Activated naive CD4-positive, alpha-beta T cell treated with anti-CD3 and anti-CD28 coated beads for 36 hours (primary cell): ENCODE measurements at regions of chr10 and their contacts with region 1.

Region 1: GRCh38 chr10:12068449-12069269 is at the start of gene DHTKD1:
- DNase-seq: peak; percentile 99
- H3K4me3 Mint-ChIP-seq: peak within 1 kb of the TSS; percentile 83
- H3K27ac Mint-ChIP-seq: peak within 1 kb of the TSS; percentile 88
- H3K4me1 Mint-ChIP-seq: peaks cover 21% of the 10 kb centered on the region
- H3K27me3 Mint-ChIP-seq: no peaks in the 10 kb centered on the region
- total RNA-seq, gene DHTKD1: 17.0 to 20.1 TPM

Region 2: GRCh38 chr10:12042797-12043651 is 25.6 kb before region 1 on chr10 and contains the start of gene UPF2:
- CTCF ChIA-PET with region 1: no interaction called
- intact Hi-C with region 1: loop called (anchors 1 kb)
- DNase-seq: peak; percentile 98
- H3K4me3 Mint-ChIP-seq: peak within 1 kb of the TSS; percentile 98
- H3K27ac Mint-ChIP-seq: peak within 1 kb of the TSS; percentile 99
- H3K4me1 Mint-ChIP-seq: peaks cover 33% of the 10 kb centered on the region
- H3K27me3 Mint-ChIP-seq: no peaks in the 10 kb centered on the region
- total RNA-seq, gene UPF2: 27.5 to 29.5 TPM

Region 3: DNA sequence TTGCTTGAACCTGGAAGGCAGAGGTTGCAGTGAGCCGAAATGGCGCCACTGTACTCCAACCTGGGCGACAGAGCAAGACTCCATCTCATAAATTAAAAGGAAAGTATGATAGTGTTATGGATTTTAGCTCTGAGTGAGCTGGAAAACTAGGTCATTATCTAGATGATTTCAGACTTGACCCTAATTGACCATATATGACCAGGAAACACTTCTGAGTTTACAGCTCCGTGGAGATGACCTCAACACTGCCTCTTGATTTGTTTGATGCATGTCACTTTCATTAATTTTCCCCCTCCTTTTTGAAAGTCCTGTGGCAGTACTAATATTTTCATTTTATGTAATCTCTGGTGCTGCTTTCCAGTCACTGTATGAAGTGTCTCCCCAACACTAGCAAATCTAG is 53.0 kb after region 1 on chr10:
- CTCF ChIA-PET with region 1: no interaction called
- intact Hi-C with region 1: loop called (anchors 1 kb)
- DNase-seq: no peak
- H3K4me3 Mint-ChIP-seq: no peak overlapping the region
- H3K27ac Mint-ChIP-seq: peak overlapping the region; percentile 98
- H3K4me1 Mint-ChIP-seq: peaks cover 30% of the 10 kb centered on the region
- H3K27me3 Mint-ChIP-seq: no peaks in the 10 kb centered on the region

Region 4: GRCh38 chr10:12140038-12140437 is 71.4 kb after region 1 on chr10:
- CTCF ChIA-PET with region 1: no interaction called
- intact Hi-C with region 1: no loop called
- DNase-seq: no peak
- H3K4me3 Mint-ChIP-seq: no peak overlapping the region
- H3K27ac Mint-ChIP-seq: no peak overlapping the region
- H3K4me1 Mint-ChIP-seq: no peaks in the 10 kb centered on the region
- H3K27me3 Mint-ChIP-seq: no peaks in the 10 kb centered on the region

Region 5: GRCh38 chr10:12195603-12196506 is 127.2 kb after region 1 on chr10 and contains the starts of genes CDC123 and NUDT5:
- CTCF ChIA-PET with region 1: no interaction called
- intact Hi-C with region 1: loop called (anchors 1 kb)
- DNase-seq: peak; percentile 93
- H3K4me3 Mint-ChIP-seq: peak within 1 kb of the TSS; percentile 96
- H3K27ac Mint-ChIP-seq: peak within 1 kb of the TSS; percentile 98
- H3K4me1 Mint-ChIP-seq: peaks cover 58% of the 10 kb centered on the region
- H3K27me3 Mint-ChIP-seq: no peaks in the 10 kb centered on the region
- total RNA-seq, gene CDC123: 108 to 117 TPM
- total RNA-seq, gene NUDT5: 97.1 to 100 TPM